SK-N-SH (cell line): ENCODE measurements at regions of chr10 and their contacts with region 1.

Region 1: DNA sequence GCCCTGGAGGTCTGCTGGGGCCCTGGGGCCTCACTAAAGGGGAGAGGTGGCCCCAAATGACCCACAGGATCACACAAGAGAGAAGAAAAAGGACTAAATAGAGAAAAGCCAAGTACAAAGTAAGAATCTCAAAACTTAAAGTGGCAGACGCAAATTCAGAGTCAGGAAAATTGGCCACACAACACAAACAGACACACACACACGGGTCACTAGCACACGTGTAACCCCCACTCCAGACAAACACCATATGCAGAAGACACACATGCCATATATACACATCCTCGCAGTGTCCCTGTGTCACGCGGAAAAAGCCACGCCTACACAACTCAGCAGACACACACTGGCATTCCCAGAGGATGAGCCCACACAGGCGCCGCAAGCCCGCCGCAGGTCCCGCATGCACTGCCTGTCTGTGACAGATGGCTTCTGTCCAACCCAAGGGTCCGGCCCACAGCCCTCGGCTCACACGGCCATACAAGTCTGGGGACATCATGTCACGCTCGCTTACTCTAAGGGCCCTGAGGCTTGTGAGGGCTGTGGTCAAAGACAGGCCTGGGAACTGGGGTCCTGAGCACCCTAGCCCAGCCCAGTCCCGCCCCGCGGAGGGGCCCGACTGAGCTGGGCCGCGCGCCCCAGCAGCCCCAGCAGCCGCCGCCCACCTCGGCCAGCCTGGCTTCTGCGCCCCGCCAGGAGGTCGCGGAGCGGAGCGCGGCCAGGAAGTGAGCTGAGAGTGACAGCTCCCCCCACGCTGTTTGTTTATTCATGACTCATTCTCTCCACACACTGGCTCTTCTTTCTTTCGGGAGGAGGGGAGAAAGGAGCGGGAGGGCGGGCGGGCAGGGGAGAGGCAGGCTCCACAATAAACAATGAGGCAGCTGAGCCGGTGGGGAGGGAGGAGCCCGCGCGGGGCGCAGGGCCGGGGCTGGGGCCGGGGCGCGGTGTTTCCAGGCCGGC is 95.5 kb upstream of the ZMIZ1 start:
- DNase-seq: peak; percentile 92
- H3K4me3 ChIP-seq: peak overlapping the region; percentile 43 to 62
- H3K27ac ChIP-seq: peak overlapping the region; percentile 99
- H3K4me1 ChIP-seq: peaks cover 29 to 66% of the 10 kb centered on the region in 2 experiments
- H3K27me3 ChIP-seq: no peaks in the 10 kb centered on the region
- CTCF ChIP-seq: no peak
- EP300 ChIP-seq: peak; percentile 28 to 56; a peak in 3 of 4 replicates
- RAD21 ChIP-seq: peak; percentile 12; the same call in 1 of the 2 replicates

Region 2: GRCh38 chr10:78763651-78764311 is 209.4 kb before region 1 on chr10:
- CTCF ChIA-PET with region 1: no interaction called
- POLR2A ChIA-PET with region 1: no interaction called
- DNase-seq: no peak
- H3K4me3 ChIP-seq: no peak overlapping the region
- H3K27ac ChIP-seq: peak overlapping the region in 1 of 2 experiments; percentile 48; a peak in 1 of 4 replicates
- H3K4me1 ChIP-seq: peaks cover 0 to 44% of the 10 kb centered on the region in 2 experiments; a peak in 1 of 4 replicates
- H3K27me3 ChIP-seq: no peaks in the 10 kb centered on the region
- CTCF ChIP-seq: no peak
- EP300 ChIP-seq: peak in 1 of 2 experiments; percentile 12; a peak in 1 of 4 replicates
- RAD21 ChIP-seq: no peak

Region 3: GRCh38 chr10:78777466-78777865 is 195.8 kb before region 1 on chr10:
- CTCF ChIA-PET with region 1: no interaction called
- POLR2A ChIA-PET with region 1: no interaction called
- DNase-seq: peak; percentile 64
- H3K4me3 ChIP-seq: no peak overlapping the region
- H3K27ac ChIP-seq: peak overlapping the region in 1 of 2 experiments; percentile 86; a peak in 2 of 4 replicates
- H3K4me1 ChIP-seq: peaks cover 15 to 44% of the 10 kb centered on the region in 2 experiments; a peak in 3 of 4 replicates
- H3K27me3 ChIP-seq: no peaks in the 10 kb centered on the region
- CTCF ChIP-seq: no peak
- EP300 ChIP-seq: peak in 1 of 2 experiments; percentile 46; a peak in 1 of 4 replicates
- RAD21 ChIP-seq: peak; percentile 9; the same call in 1 of the 2 replicates

Region 4: DNA sequence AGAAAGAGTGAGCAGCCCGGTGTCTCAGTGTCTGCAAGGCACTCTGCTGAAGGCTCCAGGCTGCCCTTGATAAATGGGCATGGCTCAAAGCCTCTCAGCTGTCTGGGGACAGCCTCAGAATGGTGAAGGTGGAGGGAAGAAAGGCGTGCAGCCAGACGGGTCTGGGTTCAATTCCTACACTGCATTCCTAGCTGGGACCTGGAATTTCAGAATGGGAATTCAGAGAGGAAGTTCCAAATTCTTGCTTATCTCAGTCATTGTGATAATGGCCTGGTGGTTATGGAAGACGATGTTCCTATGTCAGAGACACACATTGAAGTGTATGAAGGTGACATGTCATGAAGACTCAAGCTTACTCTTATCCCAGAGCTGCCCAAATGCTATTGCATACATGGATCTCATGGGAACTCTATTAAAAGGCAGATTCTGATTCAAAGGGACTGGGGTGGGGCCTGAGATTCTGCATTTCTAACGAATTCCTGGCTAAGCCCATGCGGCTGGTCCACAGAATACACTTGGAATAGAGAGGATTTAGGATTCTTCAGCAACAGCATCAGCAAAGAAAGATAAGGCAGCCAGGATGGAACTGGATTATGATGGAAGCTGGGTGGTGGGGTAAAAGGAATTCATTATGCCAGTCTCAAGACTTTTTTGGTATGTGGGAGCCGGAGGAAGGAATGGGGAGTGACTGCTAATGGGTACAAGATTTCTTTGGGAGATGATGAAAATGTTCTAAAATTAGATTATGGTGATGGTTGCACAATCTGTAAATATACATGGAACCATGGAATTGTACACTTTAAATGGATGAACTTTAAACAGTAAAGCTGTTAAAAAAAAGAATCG is 13.0 kb after region 1 on chr10:
- CTCF ChIA-PET with region 1: interaction called, 18 read pairs
- POLR2A ChIA-PET with region 1: interaction called, 3 read pairs
- DNase-seq: no peak
- H3K4me3 ChIP-seq: no peak overlapping the region
- H3K27ac ChIP-seq: no peak overlapping the region
- H3K4me1 ChIP-seq: peaks cover 0 to 10% of the 10 kb centered on the region in 2 experiments; a peak in 1 of 4 replicates
- H3K27me3 ChIP-seq: no peaks in the 10 kb centered on the region
- CTCF ChIP-seq: no peak
- EP300 ChIP-seq: no peak
- RAD21 ChIP-seq: no peak

Region 5: GRCh38 chr10:78997646-78998618 is 24.7 kb after region 1 on chr10:
- CTCF ChIA-PET with region 1: interaction called, 12 read pairs
- POLR2A ChIA-PET with region 1: interaction called, 3 read pairs
- DNase-seq: no peak
- H3K4me3 ChIP-seq: no peak overlapping the region
- H3K27ac ChIP-seq: 0 out of 4 replicates have a peak overlapping the region, but pooled peaks of 1 of the 2 experiments have one; percentile 4
- H3K4me1 ChIP-seq: peaks cover 0 to 34% of the 10 kb centered on the region in 2 experiments; a peak in 1 of 4 replicates
- H3K27me3 ChIP-seq: no peaks in the 10 kb centered on the region
- CTCF ChIP-seq: no peak
- EP300 ChIP-seq: no peak
- RAD21 ChIP-seq: no peak

Region 6: DNA sequence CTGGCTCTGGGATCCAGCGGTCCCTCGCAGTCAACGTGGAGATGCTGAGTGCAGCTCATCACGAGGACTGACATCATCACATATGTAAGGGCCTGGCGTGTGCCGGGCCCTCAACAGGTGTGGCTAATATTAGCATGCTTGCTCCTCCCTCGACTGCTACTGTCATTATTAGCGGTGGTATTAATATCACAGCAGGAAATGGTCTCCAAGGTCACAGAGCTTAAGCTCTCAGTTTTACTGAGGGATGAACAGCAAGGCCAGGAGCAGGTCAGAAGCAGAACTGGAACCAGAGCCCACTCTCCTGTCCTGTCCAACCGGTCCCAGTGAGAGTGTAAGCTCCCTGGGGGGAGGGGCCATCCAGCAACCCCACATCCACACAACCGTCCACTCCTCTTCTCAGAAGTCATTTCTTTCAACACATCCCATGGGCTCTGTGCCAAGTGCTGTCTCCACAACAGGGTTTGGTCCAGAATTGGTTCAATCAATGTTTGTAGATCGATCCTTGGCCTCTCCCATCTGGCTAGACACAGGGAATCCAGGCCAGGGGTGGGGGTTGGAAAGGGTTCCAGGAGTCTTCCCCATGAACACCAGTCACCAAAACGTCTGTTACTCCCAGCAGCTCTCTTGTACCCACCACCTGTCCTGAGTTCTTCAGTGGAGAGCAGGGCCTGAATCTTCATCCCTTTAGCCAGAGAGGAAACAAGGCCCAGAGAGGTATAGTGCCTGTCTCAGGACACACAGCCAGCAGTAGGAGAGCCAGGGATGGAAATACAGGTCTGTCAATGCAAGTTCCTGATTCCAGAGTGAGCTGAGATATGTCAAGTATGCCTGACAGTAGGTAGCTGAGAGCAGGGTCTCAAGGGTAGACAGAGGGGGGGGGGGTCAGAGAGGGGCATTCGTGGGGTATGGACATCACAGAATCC is 50.3 kb after region 1 on chr10:
- CTCF ChIA-PET with region 1: interaction called, 17 read pairs
- POLR2A ChIA-PET with region 1: interaction called, 7 read pairs
- DNase-seq: no peak
- H3K4me3 ChIP-seq: no peak overlapping the region
- H3K27ac ChIP-seq: peak overlapping the region in 1 of 2 experiments; percentile 98; a peak in 2 of 4 replicates
- H3K4me1 ChIP-seq: peaks cover 0 to 77% of the 10 kb centered on the region in 2 experiments; a peak in 2 of 4 replicates
- H3K27me3 ChIP-seq: no peaks in the 10 kb centered on the region
- CTCF ChIP-seq: no peak
- EP300 ChIP-seq: no peak
- RAD21 ChIP-seq: no peak

Region 7: DNA sequence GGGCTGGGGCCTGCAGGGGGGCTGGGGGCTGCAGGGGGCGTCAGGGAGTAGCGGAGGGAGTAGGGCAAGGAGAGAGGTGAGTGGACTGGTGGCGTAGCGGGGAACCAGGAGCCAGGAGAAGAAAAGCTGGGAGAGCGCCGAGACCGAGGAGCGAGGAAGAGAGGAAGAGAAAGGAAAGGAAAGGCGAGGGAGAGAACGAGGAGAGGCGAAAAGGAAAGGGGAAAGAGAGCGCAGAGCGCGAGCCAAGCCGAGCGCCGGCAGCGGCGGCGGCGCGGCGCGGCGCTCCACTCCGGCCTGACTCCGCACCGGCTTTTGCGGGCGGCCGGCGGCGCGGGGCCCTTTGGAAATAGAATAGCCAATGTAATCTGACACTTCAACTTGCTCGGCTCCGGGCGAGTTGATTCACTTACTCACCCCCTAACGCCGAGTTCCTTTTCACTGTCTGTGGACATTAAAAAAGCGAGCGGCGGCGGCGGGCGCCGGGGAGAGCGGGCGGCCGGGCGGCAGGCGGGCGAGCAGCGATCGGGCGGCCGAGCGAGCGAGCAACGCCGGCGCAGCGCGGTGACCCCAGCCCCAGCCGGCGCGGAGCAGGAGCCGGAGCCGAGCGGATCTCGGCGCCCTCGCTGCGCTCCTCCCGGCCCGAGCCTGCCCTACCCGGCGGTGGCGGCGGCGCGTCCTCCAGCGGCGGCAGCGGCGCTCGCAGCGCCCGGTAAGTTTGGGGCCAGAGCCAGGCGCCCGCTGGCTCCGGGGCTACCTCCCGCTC is 95.5 kb after region 1 on chr10 and contains the start of gene ZMIZ1:
- CTCF ChIA-PET with region 1: interaction called, 17 read pairs
- POLR2A ChIA-PET with region 1: interaction called, 10 read pairs
- DNase-seq: peak; percentile 88
- H3K4me3 ChIP-seq: peak within 1 kb of the TSS; percentile 93 to 99
- H3K27ac ChIP-seq: peak within 1 kb of the TSS; percentile 88 to 97
- H3K4me1 ChIP-seq: peaks cover 9 to 43% of the 10 kb centered on the region in 2 experiments
- H3K27me3 ChIP-seq: no peaks in the 10 kb centered on the region
- CTCF ChIP-seq: 0 out of 2 replicates have a peak, but pooled peaks have one; percentile 1
- EP300 ChIP-seq: peak in 1 of 2 experiments; percentile 32; a peak in 1 of 4 replicates
- RAD21 ChIP-seq: peak; percentile 29
- polyA plus RNA-seq, gene ZMIZ1: 6.6 and 23.5 TPM in 2 replicates

Region 8: DNA sequence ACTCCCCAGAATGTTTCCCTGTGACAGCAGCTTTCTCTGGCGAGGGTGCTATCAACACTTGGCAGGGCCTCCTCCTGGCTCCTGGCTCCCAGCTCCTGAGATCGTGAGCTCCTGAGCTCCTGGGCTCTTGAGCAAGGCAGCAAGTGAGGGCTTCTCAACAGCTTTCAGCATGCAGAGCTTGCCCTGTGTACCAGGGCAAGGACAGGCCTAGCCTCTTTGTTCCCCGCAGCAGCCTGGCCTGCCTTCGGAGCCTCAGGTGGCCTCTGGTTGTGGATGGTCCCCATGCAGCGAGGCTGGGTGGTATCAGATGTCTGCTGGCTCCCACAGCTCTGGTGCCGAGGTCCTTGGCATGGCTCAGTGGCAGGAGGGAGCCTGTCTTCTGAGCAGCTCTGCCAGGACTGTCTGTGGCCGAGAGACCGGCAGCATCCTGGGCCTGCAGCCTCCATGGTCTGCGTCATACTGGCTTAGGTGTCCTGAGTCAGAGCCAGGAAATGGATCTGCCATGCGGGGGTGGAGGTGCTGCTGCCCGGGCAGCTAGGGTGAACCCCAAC is 139.7 kb after region 1 on chr10:
- CTCF ChIA-PET with region 1: no interaction called
- POLR2A ChIA-PET with region 1: no interaction called
- DNase-seq: peak; percentile 63
- H3K4me3 ChIP-seq: no peak overlapping the region
- H3K27ac ChIP-seq: peak overlapping the region; percentile 89 to 90
- H3K4me1 ChIP-seq: peaks cover 51 to 98% of the 10 kb centered on the region in 2 experiments
- H3K27me3 ChIP-seq: no peaks in the 10 kb centered on the region
- CTCF ChIP-seq: no peak
- EP300 ChIP-seq: peak in 1 of 2 experiments; percentile 29; a peak in 1 of 4 replicates
- RAD21 ChIP-seq: no peak

Region 9: GRCh38 chr10:79188154-79188960 is 215.1 kb after region 1 on chr10:
- CTCF ChIA-PET with region 1: no interaction called
- POLR2A ChIA-PET with region 1: no interaction called
- DNase-seq: no peak
- H3K4me3 ChIP-seq: no peak overlapping the region
- H3K27ac ChIP-seq: peak overlapping the region; percentile 60 to 93; a peak in 2 of 4 replicates
- H3K4me1 ChIP-seq: peaks cover 51 to 97% of the 10 kb centered on the region in 2 experiments; a peak in 3 of 4 replicates
- H3K27me3 ChIP-seq: no peaks in the 10 kb centered on the region
- CTCF ChIP-seq: no peak
- EP300 ChIP-seq: no peak
- RAD21 ChIP-seq: no peak